Heart left ventricle (tissue), 16 donors: ENCODE measurements at regions of chr6 and their contacts with region 1.

Region 1: GRCh38 chr6:6661684-6662083 is 73.2 kb downstream of the LY86 start:
- DNase-seq: peak in 4 of 5 donors; percentile 59 to 82 (median 72)
- ATAC-seq: peak; percentile 71 to 80 (median 73)
- H3K4me3 ChIP-seq: no peak overlapping the region
- H3K27ac ChIP-seq: peak overlapping the region in 10 of 12 donors; percentile 18 to 91 (median 58)
- H3K4me1 ChIP-seq: peaks cover 0 to 76% (median 33%) of the 10 kb centered on the region in 12 donors
- H3K27me3 ChIP-seq: no peaks in the 10 kb centered on the region
- CTCF ChIP-seq: no peak
- POLR2A ChIP-seq: no peak

Region 2: GRCh38 chr6:6591778-6592465 is 69.8 kb before region 1 on chr6:
- intact Hi-C with region 1: loop called in 4 of 10 experiments (anchors 2 to 10 kb)
- DNase-seq: peak in 4 of 5 donors; percentile 35 to 65 (median 40)
- ATAC-seq: peak in 3 of 4 donors; percentile 38 to 56 (median 53)
- H3K4me3 ChIP-seq: no peak overlapping the region
- H3K27ac ChIP-seq: peak overlapping the region; percentile 10 to 94 (median 66)
- H3K4me1 ChIP-seq: peaks cover 0 to 90% (median 63%) of the 10 kb centered on the region in 12 donors
- H3K27me3 ChIP-seq: no peaks in the 10 kb centered on the region
- CTCF ChIP-seq: no peak
- POLR2A ChIP-seq: no peak

Region 3: GRCh38 chr6:6599468-6599873 is 62.2 kb before region 1 on chr6:
- intact Hi-C with region 1: loop called in 3 of 10 experiments (anchors 5 to 10 kb)
- DNase-seq: peak in 4 of 5 donors; percentile 54 to 73 (median 60)
- ATAC-seq: peak; percentile 82 to 89 (median 86)
- H3K4me3 ChIP-seq: no peak overlapping the region
- H3K27ac ChIP-seq: peak overlapping the region in 4 of 12 donors; percentile 15 to 45 (median 36)
- H3K4me1 ChIP-seq: peaks cover 0 to 46% (median 35%) of the 10 kb centered on the region in 12 donors
- H3K27me3 ChIP-seq: no peaks in the 10 kb centered on the region
- CTCF ChIP-seq: no peak
- POLR2A ChIP-seq: no peak

Region 4: DNA sequence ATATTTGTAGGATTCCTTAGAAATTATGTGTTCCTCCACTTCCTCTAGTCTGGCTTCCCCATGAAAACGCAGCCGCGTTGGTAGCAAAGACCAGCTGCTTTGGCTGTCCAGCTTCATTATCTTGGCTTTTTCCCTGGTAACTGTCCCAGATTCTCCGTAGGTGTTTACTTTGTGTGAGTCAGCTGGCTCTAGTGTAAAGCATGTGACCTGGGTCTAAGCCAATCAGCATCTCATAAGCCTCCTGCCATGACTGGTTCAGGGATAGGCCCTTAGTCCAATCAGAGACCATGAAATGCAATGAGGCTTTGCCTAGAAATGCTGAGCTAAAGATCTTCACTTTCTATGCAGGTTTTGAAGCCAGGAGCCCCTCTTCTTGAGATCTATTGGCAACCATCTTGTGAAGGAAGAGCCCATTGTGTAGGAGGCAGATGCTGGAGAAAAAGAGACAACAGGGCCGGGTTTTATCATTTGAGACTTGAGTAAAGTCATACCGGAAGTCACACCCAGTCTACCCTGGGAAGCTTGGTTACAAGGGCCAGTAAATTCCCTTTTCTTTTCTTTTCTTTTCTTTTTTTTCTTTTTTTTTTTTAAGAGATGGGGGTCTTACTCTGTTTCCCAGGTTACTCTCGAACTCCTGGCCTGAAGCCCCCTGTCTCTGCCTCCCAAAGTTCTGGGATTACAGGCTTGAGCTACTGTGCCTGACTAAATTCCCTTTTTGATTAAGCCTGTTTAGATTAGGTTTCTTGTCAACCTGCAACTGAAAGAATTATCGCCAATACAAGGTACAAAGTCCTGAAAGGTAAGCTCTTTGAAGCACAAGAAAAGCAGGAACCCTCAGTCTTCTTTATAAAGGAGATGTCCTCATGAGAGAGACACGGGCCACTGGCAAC is 189.6 kb after region 1 on chr6:
- intact Hi-C with region 1: no loop called
- DNase-seq: peak in 4 of 5 donors; percentile 54 to 65 (median 56)
- ATAC-seq: peak; percentile 90 to 99 (median 96)
- H3K4me3 ChIP-seq: no peak overlapping the region
- H3K27ac ChIP-seq: peak overlapping the region in 6 of 12 donors; percentile 22 to 73 (median 37)
- H3K4me1 ChIP-seq: peaks cover 0 to 25% (median 5%) of the 10 kb centered on the region in 12 donors
- H3K27me3 ChIP-seq: no peaks in the 10 kb centered on the region
- CTCF ChIP-seq: no peak
- POLR2A ChIP-seq: no peak